H1 (cell line): ENCODE measurements at regions of chr4 and their contacts with region 1.

Region 1: GRCh38 chr4:87973283-87974169 is 2.0 kb upstream of the SPP1 start:
- DNase-seq: peak; percentile 38 to 75
- H3K4me3 ChIP-seq: peak overlapping the region in 3 of 4 experiments; percentile 11 to 43 (median 21); a peak in 6 of 8 replicates
- H3K27ac ChIP-seq: no peak overlapping the region
- H3K4me1 ChIP-seq: peaks cover 2 to 11% (median 6%) of the 10 kb centered on the region in 4 experiments; a peak in 5 of 7 replicates
- H3K27me3 ChIP-seq: no peaks in the 10 kb centered on the region
- CTCF ChIP-seq: peak; percentile 36 to 79 (median 63)
- EP300 ChIP-seq: no peak
- POLR2A ChIP-seq: no peak
- RAD21 ChIP-seq: peak; percentile 69 to 77

Region 2: GRCh38 chr4:87865960-87866598 is 107.4 kb before region 1 on chr4:
- CTCF ChIA-PET with region 1: interaction called, 19 read pairs
- POLR2A ChIA-PET with region 1: interaction called, 5 read pairs
- DNase-seq: peak in 1 of 2 experiments; percentile 47
- H3K4me3 ChIP-seq: peak overlapping the region in 3 of 4 experiments; percentile 15 to 55 (median 15); a peak in 3 of 8 replicates
- H3K27ac ChIP-seq: peak overlapping the region; percentile 59; the same call in 1 of the 2 replicates
- H3K4me1 ChIP-seq: peaks cover 0 to 14% (median 7%) of the 10 kb centered on the region in 4 experiments; a peak in 3 of 7 replicates
- H3K27me3 ChIP-seq: no peaks in the 10 kb centered on the region
- CTCF ChIP-seq: no peak
- EP300 ChIP-seq: no peak; a peak in 1 of 3 replicates
- POLR2A ChIP-seq: peak; percentile 45 to 60; a peak in 2 of 3 replicates
- RAD21 ChIP-seq: no peak

Region 3: DNA sequence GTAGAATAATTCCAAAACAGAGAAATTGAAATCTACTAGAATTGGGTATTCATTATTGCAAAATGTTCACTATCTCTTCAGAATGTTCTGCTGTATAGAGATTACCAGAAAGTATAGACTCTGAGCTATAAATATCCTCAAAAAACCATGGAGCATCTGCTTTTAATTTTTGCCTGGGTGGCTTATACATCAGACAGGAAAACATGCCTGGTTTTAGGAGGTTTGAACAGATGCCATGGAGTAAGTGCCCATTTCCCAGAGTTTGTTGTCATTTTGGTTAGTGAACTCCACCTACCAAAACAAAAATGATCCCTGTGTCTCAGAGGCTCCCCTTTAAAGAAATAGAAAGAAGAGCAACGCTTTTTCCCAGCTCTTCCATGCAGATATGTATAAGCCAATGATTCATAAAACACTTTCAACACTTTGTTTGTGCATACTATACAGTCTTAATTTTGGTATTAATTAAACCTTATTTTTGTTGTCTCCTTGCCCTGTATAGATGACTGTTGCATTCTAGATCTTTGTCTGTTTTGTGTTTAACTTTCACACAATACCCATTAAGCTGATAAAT is 72.0 kb before region 1 on chr4:
- CTCF ChIA-PET with region 1: interaction called, 13 read pairs
- POLR2A ChIA-PET with region 1: no interaction called
- DNase-seq: no peak
- H3K4me3 ChIP-seq: no peak overlapping the region
- H3K27ac ChIP-seq: no peak overlapping the region
- H3K4me1 ChIP-seq: peaks cover 0 to 3% (median 2%) of the 10 kb centered on the region in 4 experiments; a peak in 3 of 7 replicates
- H3K27me3 ChIP-seq: no peaks in the 10 kb centered on the region
- CTCF ChIP-seq: no peak
- EP300 ChIP-seq: no peak
- POLR2A ChIP-seq: no peak
- RAD21 ChIP-seq: no peak

Region 4: GRCh38 chr4:87932718-87933141 is 40.8 kb before region 1 on chr4:
- CTCF ChIA-PET with region 1: interaction called, 4 read pairs
- POLR2A ChIA-PET with region 1: interaction called, 38 read pairs
- DNase-seq: no peak
- H3K4me3 ChIP-seq: no peak overlapping the region
- H3K27ac ChIP-seq: no peak overlapping the region
- H3K4me1 ChIP-seq: peaks cover 0 to 6% (median 0%) of the 10 kb centered on the region in 4 experiments; a peak in 2 of 7 replicates
- H3K27me3 ChIP-seq: no peaks in the 10 kb centered on the region
- CTCF ChIP-seq: no peak
- EP300 ChIP-seq: no peak
- POLR2A ChIP-seq: peak; percentile 62 to 99
- RAD21 ChIP-seq: no peak

Region 5: DNA sequence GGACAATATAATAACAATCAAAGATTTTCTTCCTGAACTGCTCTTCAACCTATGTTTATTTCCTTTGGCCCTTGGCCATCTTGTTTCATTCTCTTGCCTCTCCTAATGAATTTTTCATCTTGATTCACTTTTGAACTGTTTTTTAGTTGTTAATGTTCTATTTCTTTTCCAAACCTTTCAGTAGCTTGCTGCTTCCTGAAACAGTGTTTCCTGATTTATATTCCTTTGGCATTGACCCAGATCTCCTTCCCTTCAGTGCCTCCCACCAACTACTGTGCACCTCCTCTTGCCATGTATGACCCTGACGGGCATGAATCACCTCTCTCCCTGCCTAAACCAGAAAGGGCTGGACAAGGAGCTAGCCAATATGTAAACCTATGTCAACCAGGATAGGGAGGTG is 23.6 kb before region 1 on chr4:
- CTCF ChIA-PET with region 1: interaction called, 94 read pairs
- POLR2A ChIA-PET with region 1: interaction called, 11 read pairs
- DNase-seq: no peak
- H3K4me3 ChIP-seq: no peak overlapping the region
- H3K27ac ChIP-seq: no peak overlapping the region
- H3K4me1 ChIP-seq: peaks cover 0 to 4% (median 1%) of the 10 kb centered on the region in 4 experiments; a peak in 5 of 7 replicates
- H3K27me3 ChIP-seq: no peaks in the 10 kb centered on the region; a peak in 1 of 7 replicates
- CTCF ChIP-seq: no peak
- EP300 ChIP-seq: no peak
- POLR2A ChIP-seq: no peak
- RAD21 ChIP-seq: no peak

Region 6: GRCh38 chr4:87961993-87962392 is 11.5 kb before region 1 on chr4:
- CTCF ChIA-PET with region 1: interaction called, 94 read pairs
- POLR2A ChIA-PET with region 1: interaction called, 11 read pairs
- DNase-seq: no peak
- H3K4me3 ChIP-seq: no peak overlapping the region
- H3K27ac ChIP-seq: no peak overlapping the region
- H3K4me1 ChIP-seq: peaks cover 0 to 4% (median 2%) of the 10 kb centered on the region in 4 experiments; a peak in 2 of 7 replicates
- H3K27me3 ChIP-seq: no peaks in the 10 kb centered on the region; a peak in 1 of 7 replicates
- CTCF ChIP-seq: no peak
- EP300 ChIP-seq: no peak
- POLR2A ChIP-seq: no peak
- RAD21 ChIP-seq: no peak

Region 7: GRCh38 chr4:87985097-87985886 is 11.8 kb after region 1 on chr4:
- CTCF ChIA-PET with region 1: interaction called, 22 read pairs
- POLR2A ChIA-PET with region 1: interaction called, 6 read pairs
- DNase-seq: peak in 1 of 2 experiments; percentile 74
- H3K4me3 ChIP-seq: no peak overlapping the region
- H3K27ac ChIP-seq: no peak overlapping the region
- H3K4me1 ChIP-seq: peaks cover 0 to 5% (median under 1%) of the 10 kb centered on the region in 4 experiments; a peak in 3 of 7 replicates
- H3K27me3 ChIP-seq: no peaks in the 10 kb centered on the region
- CTCF ChIP-seq: peak; percentile 84 to 97 (median 93)
- EP300 ChIP-seq: no peak
- POLR2A ChIP-seq: no peak
- RAD21 ChIP-seq: peak; percentile 88 to 93

Region 8: GRCh38 chr4:88334967-88335665 is 361.6 kb after region 1 on chr4:
- CTCF ChIA-PET with region 1: no interaction called
- POLR2A ChIA-PET with region 1: no interaction called
- DNase-seq: peak in 1 of 2 experiments; percentile 38
- H3K4me3 ChIP-seq: no peak overlapping the region
- H3K27ac ChIP-seq: no peak overlapping the region
- H3K4me1 ChIP-seq: no peaks in the 10 kb centered on the region
- H3K27me3 ChIP-seq: no peaks in the 10 kb centered on the region
- CTCF ChIP-seq: no peak
- EP300 ChIP-seq: no peak
- POLR2A ChIP-seq: no peak
- RAD21 ChIP-seq: no peak